Activated T-helper 2 cell treated with anti-CD3 and anti-CD28 coated beads, Interferon-gamma antibody, Interleukin-2, Interleukin-4, amounts not matched to agents 10 μg/mL and 5 μg/mL and 100 μg/mL, durations not matched to agents 14 hours and 24 hours and 36 hours (primary cell): ENCODE measurements at regions of chr22 and their contacts with region 1.

Region 1: DNA sequence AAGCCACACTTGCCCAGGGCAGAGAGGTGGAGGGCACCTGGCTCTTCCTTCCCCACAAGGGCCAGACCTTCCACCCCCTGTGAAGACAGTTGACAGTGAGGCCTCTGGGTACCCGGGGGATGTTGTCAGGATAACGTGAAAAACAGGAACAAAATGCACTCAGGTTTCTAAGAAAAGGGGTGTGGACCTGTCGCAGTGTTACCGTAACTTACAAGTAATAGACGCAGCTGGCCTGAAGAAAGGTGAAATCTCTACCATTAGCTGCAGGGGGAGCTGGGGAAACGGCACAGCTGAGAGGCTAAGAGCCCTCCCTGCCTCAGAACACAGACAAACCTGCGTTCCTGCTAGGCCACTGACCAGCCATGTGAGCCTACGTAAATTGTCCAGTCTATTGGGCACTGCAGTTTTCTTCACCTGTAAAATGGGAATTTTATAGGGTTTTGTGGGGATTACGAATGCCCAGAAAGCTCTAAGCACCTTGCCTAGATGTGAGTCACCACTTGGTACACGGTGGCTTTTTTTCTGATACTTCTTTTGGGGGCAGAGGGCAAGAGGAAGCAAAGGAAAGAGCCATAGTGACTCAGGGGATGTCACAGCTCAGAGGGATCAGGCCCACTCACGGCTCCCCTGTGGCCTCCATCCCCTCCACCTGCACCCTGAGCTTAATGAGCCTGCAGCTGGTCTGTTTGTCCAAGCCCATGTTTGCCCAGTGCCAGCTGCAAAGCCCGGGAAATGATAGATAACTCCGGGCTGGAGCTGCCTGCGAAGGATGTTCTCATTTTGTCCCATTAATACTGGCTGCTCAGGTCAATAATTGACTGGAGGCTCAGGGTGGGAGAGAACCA is 18.4 kb upstream of the CABP7 start:
- DNase-seq: no peak
- H3K4me3 Mint-ChIP-seq: no peak overlapping the region
- H3K27ac Mint-ChIP-seq: no peak overlapping the region
- H3K4me1 Mint-ChIP-seq: peaks cover 5% of the 10 kb centered on the region
- H3K27me3 Mint-ChIP-seq: peaks cover 12% of the 10 kb centered on the region

Region 2: GRCh38 chr22:29679316-29679715 is 22.1 kb before region 1 on chr22:
- intact Hi-C with region 1: no loop called
- DNase-seq: no peak
- H3K4me3 Mint-ChIP-seq: no peak overlapping the region
- H3K27ac Mint-ChIP-seq: no peak overlapping the region
- H3K4me1 Mint-ChIP-seq: no peaks in the 10 kb centered on the region
- H3K27me3 Mint-ChIP-seq: no peaks in the 10 kb centered on the region

Region 3: GRCh38 chr22:29750559-29751538 is 49.5 kb after region 1 on chr22:
- intact Hi-C with region 1: loop called (anchors 5 kb)
- DNase-seq: no peak
- H3K4me3 Mint-ChIP-seq: no peak overlapping the region
- H3K27ac Mint-ChIP-seq: peak overlapping the region; percentile 72
- H3K4me1 Mint-ChIP-seq: peaks cover 14% of the 10 kb centered on the region
- H3K27me3 Mint-ChIP-seq: no peaks in the 10 kb centered on the region